Activated B cell treated with CpG ODN at 0.5 μM for 24 hours (primary cell): ENCODE measurements at regions of chr12 and their contacts with region 1.

Region 1: GRCh38 chr12:89907659-89908058 is 199.0 kb upstream of the ATP2B1 start:
- DNase-seq: no peak
- ATAC-seq: no peak
- H3K4me3 Mint-ChIP-seq: no peak overlapping the region
- H3K27ac Mint-ChIP-seq: no peak overlapping the region
- H3K4me1 Mint-ChIP-seq: no peaks in the 10 kb centered on the region
- H3K27me3 Mint-ChIP-seq: no peaks in the 10 kb centered on the region
- CTCF ChIP-seq: no peak

Region 2: DNA sequence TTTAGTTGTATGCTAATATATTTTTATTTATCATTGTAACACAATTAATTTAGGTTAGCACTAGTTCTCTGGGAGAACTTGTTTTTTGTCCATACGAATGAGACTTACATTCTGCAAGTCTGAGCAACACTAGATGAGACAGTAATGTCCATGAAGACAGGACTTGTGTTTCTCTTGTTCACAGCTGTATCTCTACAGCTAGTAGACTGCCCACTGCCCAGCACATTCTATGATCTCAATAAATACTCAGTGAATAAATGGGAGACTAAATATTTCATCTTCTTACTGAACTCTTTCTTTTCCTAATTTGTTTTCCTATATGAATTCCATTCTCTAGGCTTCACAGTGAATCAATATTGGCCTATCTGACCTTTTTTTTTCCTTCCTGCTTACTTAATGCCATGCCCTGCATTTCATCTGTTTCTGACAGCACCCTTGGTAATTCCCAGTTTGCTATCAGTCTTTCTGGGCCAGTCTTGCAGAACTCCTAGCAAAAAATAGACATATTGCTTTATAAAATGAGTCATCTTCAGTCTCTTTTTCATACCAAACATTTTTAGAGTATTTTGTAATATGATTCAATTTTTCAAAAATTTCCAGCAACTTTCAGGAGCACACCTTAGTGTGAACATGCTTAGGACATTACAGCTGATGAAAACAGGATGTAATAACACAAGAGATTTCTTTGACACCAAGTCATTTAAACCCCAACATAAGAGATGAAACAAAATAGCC is 13.5 kb before region 1 on chr12:
- CTCF ChIA-PET with region 1: no interaction called
- POLR2A ChIA-PET with region 1: interaction called, 4 read pairs
- intact Hi-C with region 1: loop called (anchors 2 kb)
- DNase-seq: no peak
- ATAC-seq: peak; percentile 14
- H3K4me3 Mint-ChIP-seq: peak overlapping the region; percentile 21
- H3K27ac Mint-ChIP-seq: peak overlapping the region; percentile 72
- H3K4me1 Mint-ChIP-seq: peaks cover 36% of the 10 kb centered on the region
- H3K27me3 Mint-ChIP-seq: no peaks in the 10 kb centered on the region
- CTCF ChIP-seq: no peak

Region 3: DNA sequence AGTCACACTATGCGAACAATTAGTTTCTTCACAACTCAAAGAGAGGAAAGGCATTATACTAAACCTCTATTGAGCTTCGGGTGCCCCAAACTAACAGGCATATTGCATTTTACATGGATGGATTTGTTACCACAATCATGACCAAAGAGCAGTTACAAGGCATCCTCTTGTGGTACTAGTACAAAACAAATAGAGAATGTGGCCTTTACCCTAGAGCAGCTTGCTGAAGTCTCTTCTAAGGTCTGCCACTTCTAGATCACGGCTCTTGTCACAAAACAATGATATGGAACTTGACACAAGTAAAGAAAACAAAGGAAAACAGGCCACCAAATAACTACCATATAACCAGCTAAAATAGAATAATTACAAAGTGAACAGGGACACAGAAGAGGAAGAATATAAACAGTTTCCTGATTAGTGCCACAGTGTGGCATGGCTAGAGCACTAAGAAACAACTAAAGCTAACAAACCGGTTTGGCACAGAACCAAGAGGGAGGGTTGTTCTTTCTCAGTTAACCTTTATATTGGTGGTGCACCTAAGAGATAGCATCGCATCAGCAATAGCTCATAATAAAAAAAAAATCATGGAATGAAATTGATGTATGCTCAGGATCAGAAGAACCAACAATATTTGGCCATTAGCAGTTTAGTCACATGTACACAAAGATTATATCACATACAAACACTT is 10.7 kb after region 1 on chr12:
- CTCF ChIA-PET with region 1: no interaction called
- POLR2A ChIA-PET with region 1: no interaction called
- intact Hi-C with region 1: loop called (anchors 2 kb)
- DNase-seq: no peak
- ATAC-seq: no peak
- H3K4me3 Mint-ChIP-seq: no peak overlapping the region
- H3K27ac Mint-ChIP-seq: peak overlapping the region; percentile 64
- H3K4me1 Mint-ChIP-seq: peaks cover 39% of the 10 kb centered on the region
- H3K27me3 Mint-ChIP-seq: no peaks in the 10 kb centered on the region
- CTCF ChIP-seq: no peak

Region 4: GRCh38 chr12:89971881-89972280 is 64.2 kb after region 1 on chr12:
- CTCF ChIA-PET with region 1: no interaction called
- POLR2A ChIA-PET with region 1: no interaction called
- intact Hi-C with region 1: no loop called
- DNase-seq: no peak
- ATAC-seq: no peak
- H3K4me3 Mint-ChIP-seq: no peak overlapping the region
- H3K27ac Mint-ChIP-seq: no peak overlapping the region
- H3K4me1 Mint-ChIP-seq: peaks cover 8% of the 10 kb centered on the region
- H3K27me3 Mint-ChIP-seq: no peaks in the 10 kb centered on the region
- CTCF ChIP-seq: no peak